ENCODE measurements at regions of chr20 and their contacts with region 1.

Region 1: GRCh38 chr20:8722276-8722928 is 346.5 kb upstream of the PLCB4 start:
- DNase-seq: no peak
- H3K4me3 ChIP-seq: no peak overlapping the region
- CTCF ChIP-seq: peak; percentile 64

Region 2: DNA sequence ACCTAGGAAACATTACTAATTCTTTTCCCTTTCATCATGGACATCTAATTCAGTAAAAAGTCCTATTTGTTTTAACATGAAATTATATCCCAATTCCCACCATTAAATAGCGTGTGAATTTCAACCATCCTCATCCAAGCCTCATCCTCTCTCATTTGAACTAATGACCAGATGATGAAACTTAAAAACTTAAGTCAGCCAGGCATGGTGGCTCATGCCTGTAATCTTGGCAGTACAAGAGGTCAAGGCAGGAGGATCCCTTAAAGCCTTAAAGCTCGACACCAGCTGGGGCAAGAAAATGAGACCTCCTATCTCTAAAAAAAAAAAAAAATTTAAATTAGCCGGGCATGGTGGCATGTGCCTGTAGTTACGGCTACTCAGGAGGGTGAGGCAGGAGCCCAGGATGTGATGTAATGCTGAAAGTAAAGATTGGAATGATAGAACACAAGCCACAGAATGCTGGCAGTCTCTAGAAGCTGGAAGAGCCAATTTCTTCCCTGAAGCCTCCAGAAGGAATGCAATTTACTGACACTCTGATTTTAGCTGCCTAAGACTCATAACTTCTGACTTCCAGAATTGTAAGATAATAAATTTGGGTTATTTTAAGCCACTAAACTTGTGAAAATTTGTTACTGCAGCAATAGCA is 755.1 kb before region 1 on chr20:
- CTCF ChIA-PET with region 1: interaction called, 15 read pairs
- POLR2A ChIA-PET with region 1: no interaction called
- DNase-seq: peak; percentile 54
- H3K4me3 ChIP-seq: no peak overlapping the region
- CTCF ChIP-seq: no peak

Region 3: GRCh38 chr20:8057871-8058270 is 664.5 kb before region 1 on chr20:
- CTCF ChIA-PET with region 1: interaction called, 17 read pairs
- POLR2A ChIA-PET with region 1: no interaction called
- DNase-seq: no peak
- H3K4me3 ChIP-seq: no peak overlapping the region
- CTCF ChIP-seq: no peak

Region 4: GRCh38 chr20:8291873-8292272 is 430.5 kb before region 1 on chr20:
- CTCF ChIA-PET with region 1: interaction called, 12 read pairs
- POLR2A ChIA-PET with region 1: no interaction called
- DNase-seq: peak; percentile 77
- H3K4me3 ChIP-seq: no peak overlapping the region
- CTCF ChIP-seq: no peak

Region 5: DNA sequence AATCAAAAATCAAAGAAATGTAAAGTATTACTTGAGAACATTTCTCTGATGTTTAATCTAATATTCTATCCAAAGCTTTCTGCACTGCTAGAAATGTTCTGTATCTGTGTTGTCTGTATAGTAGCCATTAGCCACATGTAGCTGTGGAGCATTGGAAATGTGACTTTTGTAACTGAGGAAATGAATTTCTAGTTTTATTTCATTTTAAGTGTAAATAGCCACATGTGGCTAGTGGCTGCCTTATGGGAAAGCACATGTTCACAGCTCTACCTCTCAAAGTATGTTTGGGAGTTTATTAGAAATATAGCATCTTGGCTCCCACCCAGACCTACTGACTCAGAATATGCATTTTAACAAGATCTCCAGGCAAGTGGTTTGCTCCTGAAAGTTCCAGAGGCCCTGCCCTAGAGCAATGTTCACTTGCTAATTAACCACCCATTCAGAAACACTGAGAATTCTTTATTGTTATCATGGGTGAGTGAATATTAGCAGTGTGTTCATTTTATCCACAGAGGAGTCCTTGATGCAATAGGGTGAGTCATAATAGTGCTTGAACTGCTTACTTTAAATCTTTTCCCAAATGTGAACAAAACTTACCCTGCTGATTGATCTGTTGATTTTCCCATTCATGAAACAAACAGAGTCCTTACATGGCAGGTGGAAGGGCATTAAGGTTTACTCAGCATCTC is 307.7 kb before region 1 on chr20:
- CTCF ChIA-PET with region 1: interaction called, 14 read pairs
- POLR2A ChIA-PET with region 1: no interaction called
- DNase-seq: peak; percentile 69
- H3K4me3 ChIP-seq: no peak overlapping the region
- CTCF ChIP-seq: no peak

Region 6: GRCh38 chr20:8542110-8542486 is 180.3 kb before region 1 on chr20:
- CTCF ChIA-PET with region 1: interaction called, 15 read pairs
- POLR2A ChIA-PET with region 1: no interaction called
- DNase-seq: no peak
- H3K4me3 ChIP-seq: no peak overlapping the region
- CTCF ChIP-seq: no peak

Region 7: GRCh38 chr20:8744228-8744844 is 21.9 kb after region 1 on chr20:
- CTCF ChIA-PET with region 1: interaction called, 18 read pairs
- POLR2A ChIA-PET with region 1: no interaction called
- DNase-seq: no peak
- H3K4me3 ChIP-seq: no peak overlapping the region
- CTCF ChIP-seq: no peak